Left cardiac atrium (tissue), 4 donors: ENCODE measurements at regions of chr3 and their contacts with region 1.

Region 1: DNA sequence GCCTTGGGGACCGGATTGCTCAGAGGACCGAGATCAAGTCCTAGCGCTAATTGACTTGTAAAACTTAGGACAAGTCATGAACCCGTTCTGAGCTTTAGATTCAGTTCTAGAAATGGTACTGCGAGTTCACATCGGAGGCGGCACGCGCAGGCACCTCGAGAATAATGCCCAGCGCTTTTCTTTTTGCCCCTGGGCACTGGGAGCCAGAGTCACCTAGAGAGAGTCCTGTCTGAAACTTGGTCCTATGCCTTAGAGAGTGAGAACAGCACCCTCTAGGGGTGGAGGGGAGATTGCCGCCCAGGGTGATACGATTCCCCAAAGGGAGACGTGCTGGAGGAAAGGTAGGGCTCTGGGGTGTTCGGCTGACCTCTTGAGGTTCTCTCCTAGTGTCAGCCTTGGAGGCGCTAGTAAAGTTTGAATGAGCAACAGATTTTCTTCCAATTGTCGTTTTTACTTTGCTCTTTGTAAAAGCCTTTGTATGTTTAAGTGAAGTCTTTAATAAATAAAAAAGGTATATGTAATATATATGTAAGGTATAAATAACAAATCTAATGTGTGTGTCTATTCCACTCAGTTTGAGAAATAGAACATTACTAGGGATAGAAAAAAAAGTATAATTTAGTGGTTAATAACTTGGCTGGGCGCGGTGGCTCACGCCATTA is 826 bp downstream of the EEF1AKMT4 start:
- DNase-seq: peak; percentile 85
- ATAC-seq: peak; percentile 78 to 88

Region 2: DNA sequence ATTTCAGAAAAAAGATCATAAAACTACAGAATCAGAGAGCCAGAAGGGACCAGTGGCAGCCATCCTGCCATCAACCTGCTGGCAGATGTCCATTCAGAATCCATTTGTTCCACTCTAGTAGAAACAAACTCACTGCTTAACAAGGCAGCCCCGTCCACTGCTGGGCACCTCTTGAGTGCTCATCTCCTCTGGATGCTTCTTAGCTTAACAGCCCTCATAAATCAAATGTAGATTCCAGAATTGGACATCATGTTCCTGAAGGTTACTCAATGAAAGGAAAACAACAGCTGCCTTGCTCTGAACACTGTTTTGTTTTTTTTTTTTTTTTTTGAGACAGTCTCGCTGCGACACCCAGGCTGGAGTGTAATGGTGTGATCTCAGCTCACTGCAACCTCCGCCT is 269.9 kb before region 1 on chr3:
- intact Hi-C with region 1: no loop called
- DNase-seq: no peak
- ATAC-seq: no peak

Region 3: GRCh38 chr3:184154885-184155643 is 95.2 kb before region 1 on chr3 and contains the start of gene DVL3:
- intact Hi-C with region 1: loop called in 1 of 2 experiments (anchors 10 kb)
- DNase-seq: peak; percentile 73
- ATAC-seq: peak; percentile 84 to 87
- total RNA-seq, gene DVL3: 42.6 to 66.2 TPM

Region 4: GRCh38 chr3:184185461-184186308 is 64.6 kb before region 1 on chr3 and contains the start of gene ABCF3:
- intact Hi-C with region 1: loop called in 1 of 2 experiments (anchors 5 kb)
- DNase-seq: peak; percentile 100
- ATAC-seq: peak; percentile 96 to 98
- total RNA-seq, gene ABCF3: 54.4 to 78.2 TPM

Region 5: DNA sequence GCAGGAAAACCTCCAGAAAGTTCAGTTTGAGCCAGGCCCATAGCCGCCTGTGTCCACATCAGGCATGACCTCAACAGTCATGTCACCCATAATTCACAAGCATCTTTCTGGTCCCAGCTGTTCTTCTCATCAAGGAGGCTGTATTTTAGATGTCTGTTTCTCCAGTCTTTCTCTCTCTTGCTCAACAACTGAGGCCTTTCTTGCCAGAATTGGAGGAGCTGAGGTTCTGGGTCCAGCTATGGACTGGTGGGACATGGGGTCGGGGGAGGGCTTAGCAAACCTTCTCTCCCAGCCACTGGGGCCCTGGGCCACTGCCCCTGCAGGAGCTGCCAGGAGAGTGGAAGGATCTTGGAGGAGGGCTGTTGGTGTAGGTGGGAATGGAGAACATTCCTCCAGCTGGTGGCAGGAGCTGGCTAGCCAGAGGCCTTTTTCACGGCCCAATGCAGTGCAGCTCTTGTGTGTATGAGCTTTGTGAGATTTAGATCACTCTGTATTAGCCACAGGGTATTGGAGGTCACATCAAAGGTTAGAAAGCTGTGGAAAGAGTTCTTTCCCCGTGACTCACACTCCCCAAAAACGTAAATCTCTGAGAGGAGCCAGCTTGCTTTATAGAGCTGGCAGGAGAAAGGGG is 438.1 kb after region 1 on chr3:
- intact Hi-C with region 1: no loop called
- DNase-seq: no peak
- ATAC-seq: peak; percentile 44 to 48